Transverse colon (tissue), 4 donors: ENCODE measurements at regions of chr22 and their contacts with region 1.

Region 1: DNA sequence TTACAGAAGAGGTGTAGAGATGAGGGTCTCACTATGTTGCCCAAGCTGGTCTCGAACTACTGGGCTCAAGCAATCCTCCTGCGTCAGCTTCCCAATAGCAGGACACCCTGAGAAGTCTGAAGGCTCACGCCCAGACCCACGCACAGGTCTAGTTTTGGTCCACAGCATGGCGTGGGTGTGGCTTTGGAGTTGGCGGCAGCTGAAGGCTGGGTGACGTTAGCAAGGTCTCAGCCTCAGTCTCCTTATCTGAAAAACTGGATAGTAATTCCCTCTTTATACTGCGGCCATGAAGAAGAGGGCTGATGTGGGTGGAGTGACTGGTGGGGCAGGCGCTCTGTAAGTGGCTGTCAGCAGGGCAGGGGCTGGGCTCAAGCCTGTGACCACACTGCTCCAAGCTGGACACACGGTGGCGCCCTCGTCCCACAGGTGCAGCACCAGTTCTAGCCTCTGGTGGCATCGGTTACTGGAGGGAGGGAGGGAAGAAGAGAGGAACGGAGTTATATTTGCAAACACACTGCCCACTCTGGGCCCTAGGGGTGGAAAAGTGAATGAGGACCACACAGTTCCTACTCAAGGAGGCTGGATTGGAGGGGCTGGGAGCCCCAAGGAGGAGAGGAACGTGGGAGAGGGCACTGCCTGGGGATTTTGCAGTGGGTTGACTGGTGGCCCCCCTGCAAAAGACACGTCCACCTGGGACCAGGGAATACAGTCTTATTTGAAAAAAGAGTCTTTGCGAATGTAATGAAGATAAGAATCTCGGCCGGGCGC is 19.6 kb upstream of the CARD10 start:
- DNase-seq: peak; percentile 97
- H3K4me3 ChIP-seq: no peak overlapping the region
- H3K27ac ChIP-seq: peak overlapping the region in 3 of 4 donors; percentile 33 to 52 (median 47)
- H3K4me1 ChIP-seq: peaks cover 0 to 27% (median 19%) of the 10 kb centered on the region in 4 donors
- H3K27me3 ChIP-seq: no peaks in the 10 kb centered on the region
- CTCF ChIP-seq: peak; percentile 93 to 100 (median 94)
- EP300 ChIP-seq: no peak
- POLR2A ChIP-seq: no peak

Region 2: DNA sequence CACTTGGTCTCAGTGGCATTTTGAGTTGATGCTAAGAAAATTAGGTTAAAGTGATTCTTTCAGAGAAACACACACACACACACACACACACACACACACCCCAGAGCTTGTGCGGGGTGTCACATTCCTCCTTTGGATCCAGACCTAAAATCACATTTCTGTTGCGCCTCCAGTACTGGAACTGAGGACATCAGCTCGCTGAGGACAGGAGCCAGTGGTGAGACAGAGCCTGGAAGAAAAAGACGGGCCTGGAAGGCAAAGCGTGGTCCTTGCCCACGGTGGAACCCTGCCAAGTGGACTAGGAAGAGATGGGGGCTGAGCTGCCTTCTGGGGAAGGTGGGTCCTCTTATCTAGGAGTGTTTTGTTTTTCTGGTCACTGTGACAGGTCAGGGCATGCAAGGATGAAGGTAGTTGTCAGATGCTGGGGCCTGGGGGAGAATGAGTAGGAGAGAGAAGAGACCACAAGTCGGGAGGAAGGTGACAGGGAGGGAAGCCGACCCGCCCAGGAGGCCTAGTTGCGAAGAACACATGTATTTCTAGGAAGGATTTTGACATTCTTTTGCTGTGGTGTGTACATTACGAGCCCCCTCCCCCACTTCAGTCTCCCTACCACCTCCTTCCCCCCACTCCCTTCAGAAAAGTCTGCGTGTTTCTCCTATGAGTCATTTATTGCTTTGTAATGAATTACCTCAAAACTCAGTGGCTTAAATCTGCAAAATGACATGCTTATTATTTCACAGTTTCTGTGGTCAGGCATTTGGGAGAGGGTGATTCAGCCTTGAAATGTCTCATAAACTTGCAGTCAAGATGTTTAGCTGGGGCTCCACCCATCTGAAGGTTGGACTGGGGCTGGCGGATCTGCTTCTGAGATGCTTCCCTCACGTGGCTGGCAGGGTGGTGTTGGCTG is 106.7 kb before region 1 on chr22:
- in situ Hi-C with region 1: no loop called
- intact Hi-C with region 1: no loop called
- DNase-seq: no peak
- H3K4me3 ChIP-seq: no peak overlapping the region
- H3K27ac ChIP-seq: no peak overlapping the region
- H3K4me1 ChIP-seq: peaks cover 0 to 7% (median 4%) of the 10 kb centered on the region in 4 donors
- H3K27me3 ChIP-seq: peaks cover 84% of the 10 kb centered on the region
- CTCF ChIP-seq: no peak
- EP300 ChIP-seq: no peak
- POLR2A ChIP-seq: no peak

Region 3: GRCh38 chr22:37581504-37581903 is 42.7 kb after region 1 on chr22:
- in situ Hi-C with region 1: loop called in 1 of 4 experiments (anchors 10 kb)
- intact Hi-C with region 1: no loop called
- DNase-seq: peak; percentile 72
- H3K4me3 ChIP-seq: no peak overlapping the region
- H3K27ac ChIP-seq: peak overlapping the region; percentile 32 to 77 (median 62)
- H3K4me1 ChIP-seq: peaks cover 0 to 33% (median 28%) of the 10 kb centered on the region in 4 donors
- H3K27me3 ChIP-seq: no peaks in the 10 kb centered on the region
- CTCF ChIP-seq: no peak
- EP300 ChIP-seq: no peak
- POLR2A ChIP-seq: peak; percentile 21

Region 4: GRCh38 chr22:37599153-37599552 is 60.4 kb after region 1 on chr22:
- in situ Hi-C with region 1: no loop called
- intact Hi-C with region 1: loop called (anchors 5 kb)
- DNase-seq: peak; percentile 78
- H3K4me3 ChIP-seq: no peak overlapping the region
- H3K27ac ChIP-seq: peak overlapping the region; percentile 61 to 78 (median 72)
- H3K4me1 ChIP-seq: peaks cover 0 to 26% (median 8%) of the 10 kb centered on the region in 4 donors
- H3K27me3 ChIP-seq: no peaks in the 10 kb centered on the region
- CTCF ChIP-seq: no peak
- EP300 ChIP-seq: no peak
- POLR2A ChIP-seq: no peak